ENCODE measurements at regions of chr15 and their contacts with region 1.

Region 1: GRCh38 chr15:59688841-59689625 is at the start of gene BNIP2:
- DNase-seq: peak; percentile 99
- H3K4me3 Mint-ChIP-seq: peak within 1 kb of the TSS; percentile 90
- H3K27ac Mint-ChIP-seq: peak within 1 kb of the TSS; percentile 91
- H3K4me1 Mint-ChIP-seq: peaks cover 41% of the 10 kb centered on the region
- H3K27me3 Mint-ChIP-seq: no peaks in the 10 kb centered on the region
- total RNA-seq, gene BNIP2: 63.5 and 64.6 TPM in 2 replicates

Region 2: DNA sequence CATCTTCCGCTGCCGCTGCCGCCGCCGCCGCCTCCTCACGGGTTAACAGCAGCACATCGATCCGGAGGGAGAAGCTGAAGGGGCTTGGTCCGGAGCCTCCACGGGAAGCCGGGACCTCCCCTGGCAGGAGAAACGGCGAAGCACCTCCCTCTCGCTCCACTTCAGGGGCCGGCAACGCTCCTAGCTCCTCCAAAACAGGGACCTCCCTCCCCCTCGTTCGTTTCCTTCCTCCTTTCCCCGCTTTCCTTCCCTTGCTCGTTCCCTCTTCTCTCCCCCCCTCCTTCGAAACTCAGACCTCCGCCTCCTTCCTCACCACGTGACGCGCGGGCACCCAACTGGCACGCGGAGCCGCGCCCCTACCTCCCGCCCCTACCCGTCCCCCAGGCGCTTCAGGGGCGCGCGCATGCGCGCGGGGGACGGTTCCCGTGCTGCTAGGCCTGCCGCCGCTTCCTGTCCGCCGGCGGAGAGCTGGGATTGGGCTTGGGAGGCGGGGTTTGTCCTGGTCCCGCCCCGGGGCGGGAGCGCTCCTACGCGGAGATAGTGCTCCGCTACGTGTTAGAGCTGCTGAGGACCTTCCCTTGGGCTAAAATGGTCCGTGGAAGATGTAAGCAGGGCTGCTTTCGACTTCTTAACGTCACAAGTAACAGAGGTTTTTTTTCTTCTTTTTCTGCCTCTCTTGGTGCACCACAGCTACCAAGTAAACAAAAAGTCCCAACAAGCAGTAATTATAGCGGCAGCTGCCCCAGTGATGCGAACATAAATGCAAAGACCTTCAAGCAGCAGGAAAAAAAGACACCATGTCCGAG is 939.3 kb before region 1 on chr15 and contains the start of gene ADAM10:
- intact Hi-C with region 1: loop called (anchors 5 kb)
- DNase-seq: peak; percentile 98
- H3K4me3 Mint-ChIP-seq: peak within 1 kb of the TSS; percentile 93
- H3K27ac Mint-ChIP-seq: peak within 1 kb of the TSS; percentile 95
- H3K4me1 Mint-ChIP-seq: peaks cover 37% of the 10 kb centered on the region
- H3K27me3 Mint-ChIP-seq: no peaks in the 10 kb centered on the region
- total RNA-seq, gene ADAM10: 98.7 and 116 TPM in 2 replicates

Region 3: GRCh38 chr15:59104912-59105732 is 583.9 kb before region 1 on chr15 and contains the start of gene CCNB2:
- intact Hi-C with region 1: loop called (anchors 2 kb)
- DNase-seq: peak; percentile 85
- H3K4me3 Mint-ChIP-seq: peak within 1 kb of the TSS; percentile 96
- H3K27ac Mint-ChIP-seq: peak within 1 kb of the TSS; percentile 99
- H3K4me1 Mint-ChIP-seq: peaks cover 46% of the 10 kb centered on the region
- H3K27me3 Mint-ChIP-seq: no peaks in the 10 kb centered on the region
- total RNA-seq, gene CCNB2: 36.6 and 38.2 TPM in 2 replicates

Region 4: DNA sequence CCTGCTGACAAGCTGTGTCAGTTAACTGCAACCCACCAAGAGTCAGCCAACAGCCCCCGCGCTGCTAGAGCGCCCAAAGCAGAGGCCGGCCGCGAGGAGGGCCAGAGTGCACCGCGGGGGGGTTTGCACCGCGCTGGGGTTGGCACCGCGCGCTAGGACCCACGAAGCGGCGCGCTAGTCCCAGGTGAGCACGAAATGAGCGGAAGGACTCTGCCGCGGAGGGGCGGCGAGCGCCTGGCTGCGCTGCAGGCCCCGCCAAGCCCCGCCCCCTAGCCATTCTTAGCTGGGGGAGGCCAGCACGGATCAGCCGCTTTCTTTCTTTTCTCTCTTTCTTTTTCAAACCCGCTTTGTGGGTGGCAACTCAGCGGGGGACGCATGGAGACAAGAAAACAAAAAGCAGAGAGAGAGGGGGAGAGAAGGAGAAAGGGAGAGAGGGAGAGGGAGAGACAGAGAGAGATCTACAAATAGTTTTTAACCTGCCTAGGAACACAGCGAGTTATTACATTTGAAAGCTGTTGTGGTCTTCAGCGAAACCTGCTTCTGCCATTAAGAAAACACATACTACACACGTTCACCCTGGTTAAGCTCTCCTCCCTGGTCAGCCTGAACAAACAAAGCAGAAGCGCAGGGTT is 308.2 kb after region 1 on chr15:
- intact Hi-C with region 1: loop called (anchors 2 kb)
- DNase-seq: peak; percentile 63
- H3K4me3 Mint-ChIP-seq: peak overlapping the region; percentile 79
- H3K27ac Mint-ChIP-seq: peak overlapping the region; percentile 27
- H3K4me1 Mint-ChIP-seq: peaks cover 73% of the 10 kb centered on the region
- H3K27me3 Mint-ChIP-seq: peaks cover 86% of the 10 kb centered on the region

Region 5: DNA sequence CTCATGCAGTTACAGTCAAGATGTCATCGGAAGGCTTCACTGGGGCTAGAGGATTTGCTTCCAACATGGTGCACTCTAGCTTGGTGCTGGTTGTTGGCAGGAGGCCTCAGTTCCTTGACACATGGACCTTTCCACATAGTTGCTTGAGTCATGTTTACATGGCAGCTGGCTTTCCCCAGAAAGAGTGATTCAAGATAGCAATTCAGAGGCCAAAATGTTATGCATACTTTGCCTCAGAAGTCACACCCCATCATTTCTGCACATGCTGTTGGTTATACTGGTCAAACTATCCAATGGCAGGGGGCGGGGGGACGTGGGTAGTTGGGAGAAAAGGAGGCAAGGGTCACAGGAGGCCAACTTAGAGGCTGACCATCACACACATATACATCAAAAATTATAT is 373.8 kb after region 1 on chr15:
- intact Hi-C with region 1: no loop called
- DNase-seq: no peak
- H3K4me3 Mint-ChIP-seq: no peak overlapping the region
- H3K27ac Mint-ChIP-seq: no peak overlapping the region
- H3K4me1 Mint-ChIP-seq: no peaks in the 10 kb centered on the region
- H3K27me3 Mint-ChIP-seq: peaks cover 10% of the 10 kb centered on the region

Region 6: GRCh38 chr15:60326824-60327654 is 638.0 kb after region 1 on chr15:
- intact Hi-C with region 1: loop called (anchors 1 kb)
- DNase-seq: peak; percentile 13
- H3K4me3 Mint-ChIP-seq: no peak overlapping the region
- H3K27ac Mint-ChIP-seq: no peak overlapping the region
- H3K4me1 Mint-ChIP-seq: peaks cover 7% of the 10 kb centered on the region
- H3K27me3 Mint-ChIP-seq: peaks cover 56% of the 10 kb centered on the region

Region 7: DNA sequence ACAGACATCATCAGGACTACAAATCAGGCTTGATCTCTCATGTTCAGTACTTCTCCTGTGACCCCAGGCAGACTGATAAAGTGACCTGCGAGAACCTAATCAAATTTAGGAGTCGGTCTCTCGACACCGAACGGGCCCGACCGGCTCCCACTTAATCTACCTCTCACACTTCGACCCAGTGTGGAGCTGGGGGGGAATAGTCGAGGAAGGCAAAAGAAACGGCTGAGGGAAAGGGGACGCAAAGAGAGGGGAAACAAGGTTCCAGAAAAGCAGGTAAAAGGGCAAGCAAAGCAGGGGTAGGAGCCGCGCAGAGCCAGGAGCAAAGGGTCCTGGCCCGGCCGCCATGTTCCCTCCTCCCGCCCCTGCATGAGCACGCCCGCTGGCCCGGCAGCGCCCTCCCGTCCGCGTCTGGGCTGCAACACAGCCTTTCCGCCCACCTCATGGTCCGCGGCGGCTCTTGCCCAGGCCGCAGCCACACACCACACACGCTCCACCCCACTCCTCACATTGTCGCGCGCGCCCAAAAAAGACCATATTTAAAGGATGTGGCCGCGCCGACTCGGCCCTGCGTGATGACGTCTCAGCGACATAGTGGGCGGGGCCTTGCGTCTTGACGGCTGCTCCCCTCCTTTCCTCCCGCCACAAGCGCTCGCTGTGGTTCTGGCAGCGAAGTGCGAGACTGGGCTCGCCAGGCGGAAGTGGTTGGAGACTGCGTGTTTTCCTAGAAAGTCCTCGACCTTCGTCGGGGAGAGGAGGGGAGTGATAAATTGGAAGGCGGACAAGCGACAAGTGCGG is 789.7 kb after region 1 on chr15 and contains the start of gene ICE2:
- intact Hi-C with region 1: loop called (anchors 2 kb)
- DNase-seq: peak; percentile 95
- H3K4me3 Mint-ChIP-seq: peak within 1 kb of the TSS; percentile 97
- H3K27ac Mint-ChIP-seq: peak within 1 kb of the TSS; percentile 97
- H3K4me1 Mint-ChIP-seq: peaks cover 52% of the 10 kb centered on the region
- H3K27me3 Mint-ChIP-seq: no peaks in the 10 kb centered on the region
- total RNA-seq, gene ICE2: 51.9 and 56.1 TPM in 2 replicates

Region 8: GRCh38 chr15:60551781-60552161 is 862.7 kb after region 1 on chr15:
- intact Hi-C with region 1: no loop called
- DNase-seq: no peak
- H3K4me3 Mint-ChIP-seq: peak overlapping the region; percentile 37
- H3K27ac Mint-ChIP-seq: peak overlapping the region; percentile 81
- H3K4me1 Mint-ChIP-seq: peaks cover 87% of the 10 kb centered on the region
- H3K27me3 Mint-ChIP-seq: no peaks in the 10 kb centered on the region

Measured in activated T-helper 1 cell treated with anti-CD3 and anti-CD28 coated beads, Interleukin-12 subunit alpha, Interleukin-12 subunit beta, Interleukin-2, Interleukin-4 antibody, amounts not matched to agents 30 ng/mL and 10 ng/mL and 1 ng/mL, durations not matched to agents 14 hours and 24 hours and 36 hours (primary cell).